ENCODE measurements at regions of chr10 and their contacts with region 1.

Region 1: GRCh38 chr10:101441541-101442455 is 87.8 kb downstream of the BTRC start:
- DNase-seq: peak; percentile 19
- H3K4me3 ChIP-seq: no peak overlapping the region
- CTCF ChIP-seq: peak; percentile 64

Region 2: GRCh38 chr10:101272229-101272868 is 169.4 kb before region 1 on chr10:
- CTCF ChIA-PET with region 1: interaction called, 37 read pairs
- POLR2A ChIA-PET with region 1: no interaction called
- DNase-seq: no peak
- H3K4me3 ChIP-seq: no peak overlapping the region
- CTCF ChIP-seq: peak; percentile 82

Region 3: DNA sequence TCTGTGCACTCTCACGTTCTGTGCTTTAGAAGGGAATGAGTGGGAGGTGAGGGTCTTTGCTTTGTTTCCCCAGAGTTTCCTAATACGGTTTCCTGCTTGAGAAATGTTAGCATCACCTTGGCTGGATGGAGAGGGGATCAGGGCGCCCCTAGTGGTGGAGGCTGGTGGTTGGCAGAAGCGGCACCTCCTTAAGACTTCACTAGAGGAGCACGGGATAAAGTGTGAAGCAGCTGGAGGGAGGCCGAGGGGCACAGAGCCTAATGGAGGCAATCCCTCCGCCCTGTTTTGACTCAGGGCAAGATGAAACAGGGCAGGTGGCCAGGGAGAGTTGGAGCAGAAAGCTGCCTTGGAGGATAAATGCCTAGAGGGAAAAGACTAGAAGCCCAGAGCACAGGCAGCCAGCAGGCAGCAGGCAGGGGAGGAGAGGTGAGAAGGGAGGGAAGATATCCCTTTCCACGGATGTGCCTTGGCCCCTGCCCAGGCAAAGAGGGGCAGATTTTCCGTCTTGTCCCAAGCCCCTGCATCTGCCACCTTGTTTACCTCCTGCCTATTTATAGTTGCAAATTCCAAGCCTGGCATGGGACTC is 143.8 kb before region 1 on chr10:
- CTCF ChIA-PET with region 1: interaction called, 11 read pairs
- POLR2A ChIA-PET with region 1: no interaction called
- DNase-seq: no peak
- H3K4me3 ChIP-seq: no peak overlapping the region
- CTCF ChIP-seq: peak; percentile 86

Region 4: DNA sequence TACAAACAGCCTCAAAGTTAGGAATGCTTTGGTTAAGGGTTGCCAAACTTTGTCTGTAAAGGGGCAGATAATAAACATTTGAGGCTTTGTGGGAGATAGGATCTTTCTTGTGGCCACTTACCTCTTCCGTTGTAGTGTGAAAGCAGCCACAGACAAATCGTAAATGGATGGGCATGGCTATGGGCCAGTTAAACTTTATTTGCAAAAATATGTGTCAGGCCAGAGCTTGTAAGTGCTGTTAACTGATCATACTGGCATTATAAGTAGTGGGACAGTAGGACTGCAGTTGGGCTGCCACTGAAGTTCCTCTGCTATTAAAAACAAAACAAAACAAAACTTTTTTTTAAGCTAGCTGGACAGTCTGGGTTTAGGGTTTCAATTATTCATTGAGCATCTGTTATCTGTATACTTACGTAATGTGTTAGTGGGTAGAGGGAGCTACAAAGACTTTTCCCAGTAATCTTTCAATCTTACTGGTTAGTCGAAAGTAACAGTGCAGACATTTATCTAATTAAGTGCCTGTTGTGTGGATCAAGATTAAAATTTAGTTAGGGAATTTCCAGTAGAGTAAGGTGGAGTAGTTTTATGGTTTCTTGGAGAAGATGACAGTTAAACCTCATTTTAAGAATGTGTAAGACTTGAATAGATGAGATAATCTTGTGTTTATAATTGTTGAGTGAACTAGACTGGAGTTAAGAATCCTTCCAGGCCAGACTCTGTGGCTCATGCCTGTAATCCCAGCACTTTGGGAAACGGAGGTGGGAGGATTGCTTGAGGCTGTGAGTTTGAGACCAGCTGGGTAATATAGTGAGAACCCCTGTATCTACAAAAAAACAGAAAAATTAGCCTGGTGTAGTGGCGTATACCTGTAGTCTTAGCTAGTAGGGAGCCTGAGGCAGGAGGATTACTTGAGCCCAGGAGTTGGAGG is 12.3 kb after region 1 on chr10:
- CTCF ChIA-PET with region 1: interaction called, 30 read pairs
- POLR2A ChIA-PET with region 1: no interaction called
- DNase-seq: no peak
- H3K4me3 ChIP-seq: no peak overlapping the region
- CTCF ChIP-seq: no peak